ENCODE measurements at regions of chr15 and their contacts with region 1.

Region 1: GRCh38 chr15:88246666-88247446 is 9.7 kb downstream of the NTRK3 start:
- DNase-seq: no peak
- H3K4me3 ChIP-seq: no peak overlapping the region
- CTCF ChIP-seq: peak; percentile 93

Region 2: DNA sequence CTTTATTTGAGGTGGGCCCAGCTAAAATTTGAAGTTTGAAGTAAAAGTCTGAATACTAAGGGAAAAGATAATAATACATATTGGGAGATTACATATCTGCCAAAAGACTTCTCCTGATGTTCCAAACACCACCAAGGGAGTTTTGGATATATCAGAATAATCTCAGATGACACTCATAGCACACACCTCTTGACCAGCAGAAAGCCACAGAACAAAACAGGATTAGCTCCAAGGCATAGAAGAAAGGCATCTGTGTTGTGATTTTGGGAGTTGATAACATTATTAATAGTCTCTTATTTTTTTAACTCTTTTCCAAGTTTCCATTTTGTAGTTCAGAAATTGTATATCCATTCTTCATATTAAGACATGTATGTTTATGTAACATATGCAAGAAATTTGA is 1337.7 kb before region 1 on chr15:
- CTCF ChIA-PET with region 1: interaction called, 66 read pairs
- POLR2A ChIA-PET with region 1: no interaction called
- DNase-seq: no peak
- H3K4me3 ChIP-seq: no peak overlapping the region
- CTCF ChIP-seq: no peak

Region 3: DNA sequence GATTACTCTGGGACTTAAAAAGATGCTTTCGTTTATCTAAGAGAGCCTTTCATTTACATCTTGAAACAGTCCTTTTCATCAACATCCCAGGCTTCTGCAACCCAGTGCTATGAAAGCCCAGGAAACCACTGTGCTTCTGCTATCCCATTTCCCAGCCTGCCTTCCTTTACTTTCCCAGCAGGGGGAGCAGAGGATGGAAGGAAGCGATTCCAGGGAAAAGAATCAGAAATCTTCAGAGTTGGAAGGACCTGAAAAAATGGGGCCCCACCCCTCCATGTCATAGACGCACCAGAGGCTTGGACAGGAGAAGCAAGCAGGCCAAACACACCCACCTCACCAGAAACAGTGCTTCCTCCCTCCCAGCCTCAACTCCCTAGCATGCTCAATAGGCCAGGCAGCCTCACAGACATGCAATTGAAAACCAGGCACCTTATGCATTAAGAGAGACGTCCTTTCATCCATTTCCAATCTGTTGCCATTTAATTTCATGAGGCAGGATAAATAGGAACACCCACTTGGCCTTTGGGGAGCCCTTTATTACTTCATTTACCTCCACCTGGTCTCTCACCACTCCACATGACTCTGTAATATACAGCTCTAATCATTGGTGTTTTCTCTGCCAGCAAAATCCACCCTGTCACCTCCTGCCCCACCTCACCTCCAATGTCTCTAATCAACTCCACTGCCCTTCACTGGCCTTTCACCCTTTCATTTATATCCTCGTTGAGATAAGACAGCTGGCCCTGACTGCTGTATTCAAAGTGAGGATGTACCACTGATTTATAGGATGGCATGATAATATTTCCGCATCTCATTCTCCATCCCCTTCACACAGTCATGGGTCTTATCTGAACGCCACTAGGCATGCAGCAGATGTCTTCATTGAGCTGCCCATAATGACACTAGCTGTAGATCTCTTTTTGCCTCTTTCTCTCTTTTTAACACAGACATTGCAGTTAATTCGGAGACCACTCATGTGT is 574.3 kb before region 1 on chr15:
- CTCF ChIA-PET with region 1: interaction called, 56 read pairs
- POLR2A ChIA-PET with region 1: no interaction called
- DNase-seq: no peak
- H3K4me3 ChIP-seq: no peak overlapping the region
- CTCF ChIP-seq: peak; percentile 74

Region 4: GRCh38 chr15:88258093-88258641 is 11.3 kb after region 1 on chr15:
- CTCF ChIA-PET with region 1: interaction called, 27 read pairs
- POLR2A ChIA-PET with region 1: no interaction called
- DNase-seq: no peak
- H3K4me3 ChIP-seq: no peak overlapping the region
- CTCF ChIP-seq: no peak

Region 5: GRCh38 chr15:88454867-88455810 is 208.3 kb after region 1 on chr15:
- CTCF ChIA-PET with region 1: interaction called, 407 read pairs
- POLR2A ChIA-PET with region 1: no interaction called
- DNase-seq: peak; percentile 17
- H3K4me3 ChIP-seq: no peak overlapping the region
- CTCF ChIP-seq: peak; percentile 91